ENCODE measurements at regions of chr17 and their contacts with region 1.

Region 1: GRCh38 chr17:1852327-1852726 is 22.5 kb downstream of the RPA1 start:
- DNase-seq: no peak
- H3K4me3 ChIP-seq: no peak overlapping the region
- H3K27ac ChIP-seq: no peak overlapping the region
- H3K27me3 ChIP-seq: no peaks in the 10 kb centered on the region
- CTCF ChIP-seq: no peak

Region 2: DNA sequence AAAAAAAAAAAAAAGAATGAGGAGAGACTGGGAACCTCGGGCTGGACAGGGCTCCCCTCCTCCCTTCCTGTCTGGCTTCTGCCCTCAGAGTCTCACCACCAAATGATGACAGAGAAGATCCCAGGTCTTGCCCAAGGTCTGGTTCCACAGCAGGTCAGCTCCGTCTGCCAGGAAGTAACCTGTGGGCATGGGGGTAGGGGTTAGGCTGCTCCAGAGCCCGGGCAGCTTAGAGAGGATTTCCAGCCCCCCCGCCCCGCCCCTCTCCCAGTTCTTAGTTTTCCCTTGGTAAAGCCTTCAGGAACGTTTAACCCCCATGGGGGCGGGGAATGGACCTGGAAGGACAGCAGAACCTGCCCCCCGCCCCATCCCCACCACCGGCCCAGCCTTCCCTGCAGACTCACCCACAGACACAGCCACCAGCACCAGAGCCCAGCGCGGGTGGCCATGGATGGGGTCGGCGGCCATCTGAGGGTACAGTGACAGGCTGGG is 142.9 kb before region 1 on chr17:
- CTCF ChIA-PET with region 1: no interaction called
- POLR2A ChIA-PET with region 1: interaction called, 13 read pairs
- DNase-seq: no peak
- H3K4me3 ChIP-seq: peak overlapping the region; percentile 66
- H3K27ac ChIP-seq: no peak overlapping the region
- H3K27me3 ChIP-seq: no peaks in the 10 kb centered on the region
- CTCF ChIP-seq: no peak